Activated B cell treated with CpG ODN at 0.5 μM for 24 hours (primary cell): ENCODE measurements at regions of chr6 and their contacts with region 1.

Region 1: GRCh38 chr6:31158140-31158862 is at the start of gene TCF19:
- DNase-seq: peak; percentile 98
- ATAC-seq: peak; percentile 91
- H3K4me3 Mint-ChIP-seq: peak within 1 kb of the TSS; percentile 95
- H3K27ac Mint-ChIP-seq: peak within 1 kb of the TSS; percentile 90
- H3K4me1 Mint-ChIP-seq: peaks cover 34% of the 10 kb centered on the region
- H3K27me3 Mint-ChIP-seq: no peaks in the 10 kb centered on the region
- CTCF ChIP-seq: no peak
- total RNA-seq, gene TCF19: 17.3 TPM in 2 replicates

Region 2: GRCh38 chr6:31070711-31071197 is 87.5 kb before region 1 on chr6:
- CTCF ChIA-PET with region 1: no interaction called
- POLR2A ChIA-PET with region 1: no interaction called
- intact Hi-C with region 1: no loop called
- DNase-seq: no peak
- ATAC-seq: no peak
- H3K4me3 Mint-ChIP-seq: no peak overlapping the region
- H3K27ac Mint-ChIP-seq: no peak overlapping the region
- H3K4me1 Mint-ChIP-seq: peaks cover 5% of the 10 kb centered on the region
- H3K27me3 Mint-ChIP-seq: no peaks in the 10 kb centered on the region
- CTCF ChIP-seq: no peak

Region 3: GRCh38 chr6:31139599-31139998 is 18.7 kb before region 1 on chr6:
- CTCF ChIA-PET with region 1: interaction called, 3 read pairs
- POLR2A ChIA-PET with region 1: no interaction called
- intact Hi-C with region 1: loop called (anchors 1 kb)
- DNase-seq: no peak
- ATAC-seq: no peak
- H3K4me3 Mint-ChIP-seq: no peak overlapping the region
- H3K27ac Mint-ChIP-seq: no peak overlapping the region
- H3K4me1 Mint-ChIP-seq: peaks cover 7% of the 10 kb centered on the region
- H3K27me3 Mint-ChIP-seq: no peaks in the 10 kb centered on the region
- CTCF ChIP-seq: no peak

Region 4: GRCh38 chr6:31186052-31186734 is 27.9 kb after region 1 on chr6:
- CTCF ChIA-PET with region 1: interaction called, 4 read pairs
- POLR2A ChIA-PET with region 1: interaction called, 10 read pairs
- intact Hi-C with region 1: no loop called
- DNase-seq: no peak
- ATAC-seq: peak; percentile 45
- H3K4me3 Mint-ChIP-seq: peak overlapping the region; percentile 79
- H3K27ac Mint-ChIP-seq: peak overlapping the region; percentile 93
- H3K4me1 Mint-ChIP-seq: peaks cover 21% of the 10 kb centered on the region
- H3K27me3 Mint-ChIP-seq: no peaks in the 10 kb centered on the region
- CTCF ChIP-seq: no peak

Region 5: DNA sequence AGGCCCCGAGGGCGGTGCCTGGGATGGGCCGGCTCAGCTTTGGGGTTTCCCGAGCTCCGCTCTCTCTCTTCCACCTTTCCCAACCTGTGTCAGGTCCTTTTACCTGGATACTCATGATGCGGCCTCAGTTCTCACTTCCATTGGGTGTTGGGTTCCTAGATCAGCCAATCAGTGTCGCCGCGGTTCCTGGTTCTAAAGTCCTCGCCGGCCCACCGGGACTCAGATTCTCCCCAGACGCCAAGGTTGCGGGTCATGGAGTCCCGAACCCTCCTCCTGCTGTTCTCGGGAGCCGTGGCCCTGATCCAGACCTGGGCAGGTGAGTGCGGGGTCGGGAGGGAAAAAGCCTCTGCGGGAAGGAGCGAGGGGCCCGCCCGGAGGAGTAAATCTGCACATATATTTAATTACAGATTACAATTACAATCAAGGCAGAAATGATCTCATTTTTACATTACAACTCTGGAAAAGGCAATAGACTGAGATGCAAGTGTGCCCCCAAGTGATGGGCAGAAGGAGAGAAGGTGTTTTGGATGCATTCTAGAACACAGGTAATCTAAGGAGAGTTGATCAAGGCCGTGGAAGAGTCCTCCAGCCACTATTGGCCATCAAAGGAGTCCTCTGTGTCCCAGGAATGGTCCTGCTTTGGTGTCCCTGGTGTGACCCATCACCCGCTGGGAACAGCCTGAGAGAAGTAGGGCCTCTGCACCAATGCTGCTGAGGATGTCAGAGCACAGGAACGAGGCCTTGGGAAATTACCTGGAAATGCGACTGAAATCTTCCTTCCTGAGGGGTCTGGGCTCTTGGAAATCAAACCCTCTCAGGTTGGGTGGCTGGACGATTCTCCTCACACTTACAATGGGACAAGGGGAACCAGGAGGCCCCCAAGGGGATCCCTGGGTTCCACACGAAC is 304.9 kb after region 1 on chr6:
- CTCF ChIA-PET with region 1: no interaction called
- POLR2A ChIA-PET with region 1: interaction called, 4 read pairs
- intact Hi-C with region 1: loop called (anchors 5 kb)
- DNase-seq: peak; percentile 79
- ATAC-seq: peak; percentile 96
- H3K4me3 Mint-ChIP-seq: peak overlapping the region; percentile 100
- H3K27ac Mint-ChIP-seq: peak overlapping the region; percentile 98
- H3K4me1 Mint-ChIP-seq: peaks cover 61% of the 10 kb centered on the region
- H3K27me3 Mint-ChIP-seq: no peaks in the 10 kb centered on the region
- CTCF ChIP-seq: no peak